H1 (cell line): ENCODE measurements at regions of chr13 and their contacts with region 1.

Region 1: DNA sequence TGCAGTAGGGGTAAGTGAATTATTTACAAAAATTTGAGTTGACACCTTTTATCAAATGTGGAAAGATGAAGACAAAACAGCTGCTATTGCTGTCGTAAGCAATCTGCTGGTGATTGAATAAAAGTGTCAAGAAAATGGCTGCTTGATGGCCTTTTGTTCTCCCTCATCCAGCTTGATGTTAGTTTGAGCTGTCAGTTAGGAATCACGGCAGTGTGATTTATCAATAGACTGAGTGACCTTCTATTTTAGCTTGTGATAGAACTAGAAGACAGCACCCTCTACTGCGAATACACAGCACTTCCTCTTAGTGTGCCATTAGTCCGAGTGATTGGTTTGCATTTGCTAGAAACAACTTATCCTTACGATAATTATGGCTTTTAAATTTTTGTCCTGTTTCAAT is 76.3 kb downstream of the MZT1 start:
- DNase-seq: no peak
- H3K4me3 ChIP-seq: no peak overlapping the region
- H3K27ac ChIP-seq: no peak overlapping the region
- H3K4me1 ChIP-seq: no peaks in the 10 kb centered on the region
- H3K27me3 ChIP-seq: no peaks in the 10 kb centered on the region
- CTCF ChIP-seq: peak in 2 of 3 experiments; percentile 28 to 65; a peak in 1 of 4 replicates
- EP300 ChIP-seq: no peak
- POLR2A ChIP-seq: no peak
- RAD21 ChIP-seq: peak; percentile 68 to 69

Region 2: GRCh38 chr13:72565893-72566292 is 85.3 kb before region 1 on chr13:
- CTCF ChIA-PET with region 1: interaction called, 26 read pairs
- POLR2A ChIA-PET with region 1: no interaction called
- DNase-seq: no peak
- H3K4me3 ChIP-seq: no peak overlapping the region
- H3K27ac ChIP-seq: no peak overlapping the region
- H3K4me1 ChIP-seq: peaks cover 0 to 7% (median 3%) of the 10 kb centered on the region in 4 experiments; a peak in 3 of 7 replicates
- H3K27me3 ChIP-seq: no peaks in the 10 kb centered on the region
- CTCF ChIP-seq: peak in 2 of 3 experiments; percentile 44 to 48; a peak in 2 of 4 replicates
- EP300 ChIP-seq: no peak
- POLR2A ChIP-seq: no peak
- RAD21 ChIP-seq: peak; percentile 67 to 72

Region 3: GRCh38 chr13:72638059-72638815 is 12.9 kb before region 1 on chr13:
- CTCF ChIA-PET with region 1: interaction called, 16 read pairs
- POLR2A ChIA-PET with region 1: no interaction called
- DNase-seq: peak in 1 of 2 experiments; percentile 71
- H3K4me3 ChIP-seq: no peak overlapping the region
- H3K27ac ChIP-seq: 0 out of 2 replicates have a peak overlapping the region, but pooled peaks have one; percentile 19
- H3K4me1 ChIP-seq: peaks cover 1 to 10% (median 5%) of the 10 kb centered on the region in 4 experiments; a peak in 4 of 7 replicates
- H3K27me3 ChIP-seq: no peaks in the 10 kb centered on the region
- CTCF ChIP-seq: no peak
- EP300 ChIP-seq: no peak
- POLR2A ChIP-seq: no peak
- RAD21 ChIP-seq: no peak

Region 4: DNA sequence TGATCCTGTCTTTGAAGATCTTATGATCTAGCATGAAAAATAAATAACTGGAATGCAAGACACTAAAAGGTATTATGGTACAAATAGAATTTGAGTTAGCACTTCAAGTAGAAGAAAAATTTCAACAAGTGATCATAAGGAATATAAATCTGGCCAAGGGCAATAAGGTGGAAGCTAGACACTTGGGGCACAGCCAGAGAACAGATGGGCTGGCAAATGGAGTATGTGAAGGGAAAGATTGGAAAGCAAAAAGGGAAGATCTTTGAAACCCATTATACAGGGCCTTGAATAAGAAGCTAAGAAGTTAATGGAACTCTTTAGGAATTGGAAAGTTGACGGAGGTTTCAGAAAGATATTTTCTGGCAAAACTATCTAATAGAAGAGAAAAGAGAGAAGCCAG is 15.2 kb after region 1 on chr13:
- CTCF ChIA-PET with region 1: interaction called, 14 read pairs
- POLR2A ChIA-PET with region 1: no interaction called
- DNase-seq: no peak
- H3K4me3 ChIP-seq: no peak overlapping the region
- H3K27ac ChIP-seq: no peak overlapping the region
- H3K4me1 ChIP-seq: no peaks in the 10 kb centered on the region
- H3K27me3 ChIP-seq: no peaks in the 10 kb centered on the region
- CTCF ChIP-seq: no peak
- EP300 ChIP-seq: no peak
- POLR2A ChIP-seq: no peak
- RAD21 ChIP-seq: no peak